Brain microvascular endothelial cell (primary cell): ENCODE measurements at regions of chr3 and their contacts with region 1.

Region 1: DNA sequence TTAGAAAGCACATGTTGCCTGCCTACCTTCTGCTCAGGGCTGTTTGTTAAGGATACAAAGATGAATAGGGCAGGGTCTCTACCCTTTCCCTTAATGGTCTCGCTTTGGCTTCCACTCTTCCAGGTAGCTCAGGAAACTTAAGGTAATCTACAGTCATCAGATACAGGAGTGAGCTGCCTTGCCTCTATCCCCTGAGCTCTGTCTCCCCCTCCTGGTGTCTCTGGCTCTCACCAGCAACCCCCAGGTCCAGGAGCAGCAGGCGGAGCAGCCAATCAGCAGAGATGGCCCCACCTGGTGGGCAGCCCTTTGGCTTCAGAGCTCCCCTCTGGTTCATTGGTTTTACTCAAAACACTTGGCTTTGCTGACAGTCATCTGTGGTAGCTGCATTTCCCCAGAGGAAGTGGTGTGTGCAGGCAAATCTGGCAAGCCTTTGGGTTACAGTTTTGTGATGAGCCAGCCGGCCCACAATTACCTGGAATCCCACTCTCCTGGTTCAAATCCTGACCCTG is 8.5 kb upstream of the CX3CR1 start:
- DNase-seq: peak; percentile 66
- H3K4me3 ChIP-seq: no peak overlapping the region
- H3K27ac ChIP-seq: no peak overlapping the region
- H3K27me3 ChIP-seq: no peaks in the 10 kb centered on the region
- CTCF ChIP-seq: peak; percentile 98

Region 2: GRCh38 chr3:38173834-38174418 is 1114.4 kb before region 1 on chr3:
- in situ Hi-C with region 1: no loop called
- DNase-seq: no peak
- H3K4me3 ChIP-seq: no peak overlapping the region
- H3K27ac ChIP-seq: peak overlapping the region; percentile 11
- H3K27me3 ChIP-seq: no peaks in the 10 kb centered on the region
- CTCF ChIP-seq: no peak

Region 3: GRCh38 chr3:39107388-39108199 is 180.8 kb before region 1 on chr3 and contains the starts of genes GORASP1 and TTC21A:
- in situ Hi-C with region 1: loop called (anchors 25 kb)
- DNase-seq: peak; percentile 89
- H3K4me3 ChIP-seq: peak within 1 kb of the TSS; percentile 88
- H3K27ac ChIP-seq: peak within 1 kb of the TSS; percentile 91
- H3K27me3 ChIP-seq: no peaks in the 10 kb centered on the region
- CTCF ChIP-seq: no peak

Region 4: GRCh38 chr3:39814007-39814406 is 525.7 kb after region 1 on chr3:
- in situ Hi-C with region 1: no loop called
- DNase-seq: peak; percentile 74
- H3K4me3 ChIP-seq: no peak overlapping the region
- H3K27ac ChIP-seq: no peak overlapping the region
- H3K27me3 ChIP-seq: peaks cover 26% of the 10 kb centered on the region
- CTCF ChIP-seq: no peak